ENCODE measurements at regions of chr1 and their contacts with region 1.

Region 1: GRCh38 chr1:35557292-35558063 is at the starts of genes KIAA0319L and NCDN:
- DNase-seq: peak; percentile 99
- H3K4me3 ChIP-seq: peak within 1 kb of the TSS; percentile 67 to 91 (median 81)
- H3K27ac ChIP-seq: peak within 1 kb of the TSS; percentile 89 to 99 (median 96)
- H3K4me1 ChIP-seq: peaks cover 0 to 68% (median 63%) of the 10 kb centered on the region in 4 donors
- H3K27me3 ChIP-seq: no peaks in the 10 kb centered on the region
- CTCF ChIP-seq: no peak
- EP300 ChIP-seq: no peak
- POLR2A ChIP-seq: peak; percentile 38 to 65
- total RNA-seq, gene KIAA0319L: 24.8 to 50.4 (median 34.8) TPM
- total RNA-seq, gene NCDN: 11.7 to 26.3 (median 14.3) TPM

Region 2: DNA sequence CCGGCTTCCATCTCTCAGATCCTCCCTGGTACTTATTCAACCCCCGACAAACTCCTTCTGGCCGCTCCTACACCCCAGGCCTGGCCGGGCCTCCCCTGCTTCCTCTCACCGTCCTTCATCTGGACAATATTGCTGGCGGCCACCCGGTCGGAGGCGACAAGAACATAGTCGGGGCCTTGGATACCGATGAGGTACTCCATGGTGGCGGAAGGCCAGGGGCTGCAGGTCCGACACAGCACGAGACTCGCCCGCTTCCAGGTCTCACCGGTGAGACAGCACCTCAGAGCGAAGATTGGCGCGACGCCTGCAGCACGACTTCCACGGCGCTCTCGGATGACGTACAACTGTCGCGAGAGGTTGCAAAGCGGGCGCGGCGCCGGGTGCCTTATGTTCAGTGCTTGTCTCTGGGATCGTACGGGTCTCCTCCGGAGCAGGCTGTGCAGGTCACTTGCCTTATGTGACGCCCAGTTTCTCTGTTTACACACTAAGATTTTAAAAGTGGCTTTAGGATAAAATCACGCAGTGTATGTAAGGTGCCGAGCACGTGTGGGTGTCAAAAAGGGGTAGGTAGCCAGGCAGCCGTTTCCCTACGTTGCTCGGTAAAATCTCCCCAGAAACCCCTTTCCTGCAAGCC is 83.9 kb after region 1 on chr1 and contains the start of gene PSMB2:
- intact Hi-C with region 1: loop called (anchors 2 kb)
- DNase-seq: peak; percentile 98
- H3K4me3 ChIP-seq: peak within 1 kb of the TSS; percentile 65 to 87 (median 74)
- H3K27ac ChIP-seq: peak within 1 kb of the TSS; percentile 88 to 95 (median 90)
- H3K4me1 ChIP-seq: peaks cover 0 to 49% (median 44%) of the 10 kb centered on the region in 4 donors
- H3K27me3 ChIP-seq: peaks cover 0 to 5% (median 0%) of the 10 kb centered on the region in 3 donors
- CTCF ChIP-seq: no peak
- EP300 ChIP-seq: peak in 1 of 4 donors; percentile 58
- POLR2A ChIP-seq: peak; percentile 66 to 71
- total RNA-seq, gene PSMB2: 29.3 to 34.2 (median 31.0) TPM

Region 3: DNA sequence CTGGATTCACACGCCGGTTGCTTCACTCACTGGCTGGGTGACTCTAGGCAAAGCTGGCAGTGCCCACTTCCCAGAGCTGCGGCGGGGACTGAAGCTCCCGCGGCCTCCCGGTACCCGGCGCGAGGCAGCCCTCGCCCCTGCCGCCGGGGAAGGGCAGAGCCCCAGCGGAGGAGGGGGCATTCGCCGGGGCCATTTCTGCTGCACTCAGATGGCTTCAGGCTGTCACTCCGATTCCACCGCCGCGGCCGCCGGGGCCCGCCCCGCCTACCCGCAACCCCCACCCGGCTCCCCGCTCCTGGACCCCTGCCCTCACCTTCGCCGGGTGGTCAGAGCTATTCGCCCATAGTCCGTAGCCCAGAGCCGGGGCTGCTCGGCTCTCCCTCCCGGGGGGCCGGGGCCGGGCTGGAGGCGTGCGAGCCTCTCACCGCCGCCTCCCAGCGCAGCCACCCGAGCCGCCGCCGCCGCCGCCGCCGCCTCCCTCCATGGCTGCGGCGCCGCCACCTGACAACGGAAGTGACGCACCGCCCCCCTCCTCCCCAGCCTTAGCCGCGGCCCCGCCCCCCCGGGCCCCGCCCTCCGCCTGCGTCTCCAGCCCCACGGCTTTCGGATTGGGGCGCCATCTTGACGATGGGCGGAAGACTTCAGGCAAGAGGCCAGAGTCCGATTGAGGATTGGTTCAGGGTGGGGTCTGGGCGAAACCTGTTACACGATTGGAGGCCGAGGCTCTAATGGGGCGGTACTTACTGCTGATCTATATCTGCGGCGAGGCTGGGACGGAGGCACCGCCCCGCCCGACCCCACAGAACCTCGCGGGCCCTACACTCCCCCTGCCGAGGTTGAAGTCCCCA is 828.2 kb after region 1 on chr1 and contains the start of gene STK40:
- intact Hi-C with region 1: no loop called
- DNase-seq: peak; percentile 99
- H3K4me3 ChIP-seq: peak within 1 kb of the TSS; percentile 78 to 97 (median 90)
- H3K27ac ChIP-seq: peak within 1 kb of the TSS; percentile 95 to 98 (median 97)
- H3K4me1 ChIP-seq: peaks cover 0 to 77% (median 66%) of the 10 kb centered on the region in 4 donors
- H3K27me3 ChIP-seq: no peaks in the 10 kb centered on the region
- CTCF ChIP-seq: no peak
- EP300 ChIP-seq: peak in 1 of 4 donors; percentile 28
- POLR2A ChIP-seq: peak in 1 of 2 donors; percentile 7
- total RNA-seq, gene STK40: 37.1 to 49.4 (median 43.5) TPM

Measured in sigmoid colon (tissue), 7 donors.